GM10248 (cell line): ENCODE measurements at regions of chr11 and their contacts with region 1.

Region 1: DNA sequence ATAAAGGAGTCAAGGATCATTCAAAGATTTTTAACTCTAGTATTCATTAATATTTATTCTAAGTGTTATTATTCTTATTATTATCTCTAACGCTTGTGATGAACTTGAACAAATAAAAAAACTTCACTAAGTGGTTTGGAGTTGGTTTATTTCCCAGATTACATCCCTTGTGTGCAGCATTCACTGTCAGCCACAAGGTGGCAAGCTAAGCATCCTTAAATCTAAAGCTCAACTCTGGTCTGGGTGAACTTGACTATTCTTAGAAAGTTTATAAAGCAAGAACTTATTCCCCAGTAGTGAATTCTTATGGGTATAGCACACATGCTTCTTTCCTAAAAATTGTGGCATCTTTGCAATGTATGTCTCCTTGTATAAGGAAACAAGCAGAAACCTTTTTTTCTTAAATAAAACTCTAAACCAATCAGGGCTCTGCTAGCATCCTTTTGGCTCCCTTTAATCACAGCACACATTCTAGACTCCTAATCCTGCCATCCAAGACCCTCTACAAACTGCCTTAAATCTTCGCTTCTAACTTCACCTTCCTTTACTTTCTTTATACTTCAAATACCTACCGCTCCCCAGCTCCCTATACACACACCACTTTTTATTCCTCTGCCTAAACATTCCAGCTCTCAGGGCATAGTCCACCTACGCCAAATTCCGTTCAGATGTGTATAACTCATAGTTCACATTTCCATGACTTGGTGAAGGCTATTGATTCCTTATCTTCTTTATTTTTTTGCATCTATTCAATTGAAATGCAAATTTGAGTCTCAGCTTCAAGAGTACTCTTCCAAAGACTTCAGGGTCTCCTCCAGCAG is 1068.8 kb downstream of the DLG2 start:
- DNase-seq: peak; percentile 19
- CTCF ChIP-seq: peak; percentile 84

Region 2: DNA sequence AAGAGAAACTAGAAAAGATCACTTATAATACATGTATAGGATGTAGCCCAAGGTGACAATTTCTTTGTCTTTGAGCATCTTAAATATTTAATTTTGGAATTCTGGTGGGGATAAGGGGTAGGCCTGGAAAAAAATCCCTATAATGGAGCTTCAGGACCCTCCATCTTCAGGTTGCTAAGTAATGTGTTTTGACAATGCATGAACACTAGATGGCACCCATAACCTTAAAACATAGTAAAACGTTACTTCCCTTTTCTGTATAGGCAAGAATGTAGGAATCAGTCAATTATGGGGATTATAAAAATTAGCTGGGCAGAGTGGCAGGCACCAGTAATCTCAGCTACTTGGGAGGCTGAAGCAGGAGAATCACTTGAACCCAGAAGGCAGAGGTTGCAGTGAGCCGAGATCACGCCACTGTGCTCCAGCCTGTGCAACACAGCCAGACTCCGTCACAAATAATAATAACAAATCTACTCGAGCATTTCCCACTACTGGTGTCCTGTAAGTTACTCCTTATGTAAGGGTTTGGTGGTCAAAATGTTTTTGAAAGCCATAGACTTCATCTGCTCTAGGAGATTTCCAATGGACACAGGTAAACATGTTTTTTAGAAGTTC is 730.2 kb before region 1 on chr11:
- CTCF ChIA-PET with region 1: interaction called, 11 read pairs
- POLR2A ChIA-PET with region 1: no interaction called
- DNase-seq: peak; percentile 33
- CTCF ChIP-seq: peak; percentile 64

Region 3: GRCh38 chr11:83836883-83837654 is 721.2 kb before region 1 on chr11:
- CTCF ChIA-PET with region 1: interaction called, 35 read pairs
- POLR2A ChIA-PET with region 1: no interaction called
- DNase-seq: peak; percentile 49
- CTCF ChIP-seq: peak; percentile 58

Region 4: DNA sequence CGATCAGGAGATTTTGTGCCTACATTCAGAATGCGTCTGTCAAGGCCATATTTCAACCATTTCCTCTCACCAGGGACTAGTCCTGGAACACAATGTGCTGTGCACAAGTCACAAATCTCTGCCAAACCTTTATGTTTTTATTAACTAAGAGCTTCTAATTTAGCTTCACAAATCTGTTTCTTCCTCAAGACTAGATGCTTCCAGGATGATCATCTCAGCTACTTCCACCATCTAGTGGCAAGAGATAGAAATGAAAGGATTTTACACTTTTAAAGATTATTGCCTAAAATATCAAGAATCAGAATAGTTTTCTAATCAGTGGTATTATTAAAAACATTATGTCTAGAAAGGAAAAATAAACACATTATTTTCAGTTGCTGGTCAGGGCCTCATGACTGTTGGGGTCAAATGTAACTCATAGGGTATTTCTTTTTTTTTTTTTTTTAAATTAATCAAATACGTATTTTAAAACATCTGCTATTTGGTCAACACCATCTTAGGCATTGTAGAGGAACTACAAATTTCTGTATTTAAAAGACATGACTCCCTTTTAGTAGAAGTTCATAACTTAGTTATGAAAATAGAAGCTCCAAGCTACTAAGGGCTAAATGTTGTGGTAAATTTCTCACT is 33.8 kb before region 1 on chr11:
- CTCF ChIA-PET with region 1: interaction called, 13 read pairs
- POLR2A ChIA-PET with region 1: no interaction called
- DNase-seq: peak; percentile 15
- CTCF ChIP-seq: peak; percentile 33

Region 5: GRCh38 chr11:84543367-84544159 is 14.7 kb before region 1 on chr11:
- CTCF ChIA-PET with region 1: interaction called, 18 read pairs
- POLR2A ChIA-PET with region 1: no interaction called
- DNase-seq: no peak
- CTCF ChIP-seq: no peak

Region 6: DNA sequence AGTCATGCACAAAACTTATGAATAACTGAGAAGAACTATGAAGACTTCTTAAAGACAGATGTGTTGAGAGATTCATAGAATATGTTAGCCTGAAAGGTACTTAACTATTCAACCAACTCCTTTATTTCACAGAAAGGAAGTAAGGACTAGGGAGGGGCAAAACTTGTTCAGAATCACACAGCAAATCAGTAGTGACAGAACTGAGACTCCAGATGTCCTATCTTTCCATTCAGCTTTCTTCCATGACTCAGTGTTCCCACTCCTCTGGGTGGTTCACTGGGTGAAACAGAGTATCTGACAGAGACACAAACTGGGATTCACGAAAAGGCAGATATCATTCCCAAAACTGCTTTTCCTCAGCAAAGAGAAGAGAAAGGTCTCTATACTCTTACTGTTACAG is 15.6 kb after region 1 on chr11:
- CTCF ChIA-PET with region 1: interaction called, 25 read pairs
- POLR2A ChIA-PET with region 1: no interaction called
- DNase-seq: no peak
- CTCF ChIP-seq: no peak

Region 7: DNA sequence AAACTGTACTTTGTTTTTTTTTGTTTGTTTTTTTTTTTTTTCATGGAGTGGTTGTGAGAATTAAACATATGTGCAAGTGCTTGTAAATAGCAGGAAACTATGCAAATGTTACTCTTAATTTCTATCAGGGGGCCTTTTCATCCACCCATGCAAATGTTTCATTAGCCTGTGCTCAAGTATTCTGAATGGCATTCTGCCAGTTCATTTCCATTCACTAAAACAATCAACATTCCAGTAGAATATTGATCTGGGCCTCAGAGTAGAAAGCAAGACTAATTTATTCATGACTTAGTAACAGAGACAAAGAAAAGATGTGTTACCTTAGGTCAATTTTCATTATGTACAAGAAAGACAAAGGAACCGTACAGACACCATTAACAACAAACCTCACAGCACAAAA is 97.4 kb after region 1 on chr11:
- CTCF ChIA-PET with region 1: no interaction called
- POLR2A ChIA-PET with region 1: no interaction called
- DNase-seq: no peak
- CTCF ChIP-seq: no peak

Region 8: GRCh38 chr11:85590848-85591483 is 1032.7 kb after region 1 on chr11:
- CTCF ChIA-PET with region 1: interaction called, 31 read pairs
- POLR2A ChIA-PET with region 1: no interaction called
- DNase-seq: no peak
- CTCF ChIP-seq: peak; percentile 34